Upper lobe of right lung (tissue), 1 donor: ENCODE measurements at regions of chr11 and their contacts with region 1.

Region 1: GRCh38 chr11:43895601-43896000 is 15.0 kb downstream of the ALKBH3 start:
- DNase-seq: no peak
- ATAC-seq: no peak
- H3K4me3 ChIP-seq: no peak overlapping the region
- H3K27ac ChIP-seq: no peak overlapping the region
- H3K4me1 ChIP-seq: no peaks in the 10 kb centered on the region
- H3K27me3 ChIP-seq: no peaks in the 10 kb centered on the region
- CTCF ChIP-seq: no peak

Region 2: DNA sequence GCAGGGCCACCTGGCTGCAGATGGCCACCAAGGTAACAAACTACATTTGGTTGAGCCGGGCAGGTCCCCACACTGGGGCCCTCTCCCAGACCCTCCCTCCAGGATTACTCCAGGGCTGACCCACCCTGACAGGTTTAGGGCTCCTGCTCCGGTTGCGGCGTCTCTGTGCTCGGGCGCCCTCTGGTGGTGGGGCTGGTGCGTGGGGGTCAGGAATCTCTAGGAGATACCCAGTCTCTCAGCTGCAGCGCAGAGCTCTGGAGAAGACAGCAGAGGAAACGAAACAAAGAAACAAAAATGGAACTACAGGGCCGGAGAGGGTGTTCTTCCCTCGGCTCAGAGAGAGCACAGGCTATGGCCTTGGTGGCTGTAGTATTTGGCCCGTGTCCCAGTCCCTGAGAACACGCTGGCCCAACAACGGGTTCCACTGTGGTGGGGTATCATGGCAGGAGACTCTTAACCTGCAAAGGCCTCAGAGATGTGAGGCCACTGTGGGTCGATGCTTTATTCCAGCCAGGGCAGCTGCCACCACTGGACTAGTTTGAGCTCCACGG is 49.2 kb after region 1 on chr11:
- intact Hi-C with region 1: loop called (anchors 10 kb)
- DNase-seq: peak; percentile 92
- ATAC-seq: peak; percentile 69
- H3K4me3 ChIP-seq: peak overlapping the region; percentile 64
- H3K27ac ChIP-seq: peak overlapping the region; percentile 86
- H3K4me1 ChIP-seq: peaks cover 20% of the 10 kb centered on the region
- H3K27me3 ChIP-seq: peaks cover 20% of the 10 kb centered on the region
- CTCF ChIP-seq: peak; percentile 85

Region 3: DNA sequence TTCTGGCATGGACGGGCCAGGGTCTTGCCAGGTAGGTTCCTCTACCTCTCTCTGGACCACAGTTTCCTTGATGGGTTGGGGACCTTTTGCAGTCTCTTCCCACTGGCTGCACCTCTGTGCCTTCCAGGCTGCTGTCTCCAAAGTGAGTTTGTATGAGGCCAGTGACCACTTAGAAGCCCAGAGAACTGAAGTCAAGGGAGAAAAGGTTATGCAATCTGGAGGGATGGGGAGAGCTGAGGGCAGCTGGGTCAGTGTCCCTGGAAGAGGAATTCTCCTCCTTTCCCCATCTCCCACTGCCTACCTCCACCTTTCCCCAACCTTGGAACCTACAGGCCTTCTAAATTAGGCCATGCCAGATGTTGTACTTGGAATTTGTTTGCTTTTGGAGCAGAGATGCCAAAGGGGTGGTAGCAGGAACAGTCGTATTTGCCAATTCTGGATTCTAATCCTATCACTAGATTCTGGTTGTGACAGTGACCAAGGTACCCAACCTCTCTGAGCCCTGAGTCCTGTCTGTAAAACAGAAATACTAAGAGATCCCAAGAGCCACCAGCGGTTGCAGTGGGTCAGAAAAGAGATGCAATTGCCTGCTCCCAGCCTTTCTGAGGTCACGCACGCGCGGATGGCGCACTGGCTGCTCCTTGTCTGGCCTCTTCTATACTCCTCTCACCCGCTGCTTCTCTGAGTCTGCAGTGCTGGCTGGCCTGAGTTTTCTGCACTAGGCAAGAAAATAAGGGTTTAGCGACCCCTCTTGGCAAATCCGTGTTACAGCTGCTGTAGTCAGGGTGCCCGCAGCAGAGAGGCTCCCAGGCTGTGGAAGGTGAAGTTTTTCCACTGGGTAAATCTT is 141.4 kb after region 1 on chr11:
- intact Hi-C with region 1: loop called (anchors 5 kb)
- DNase-seq: peak; percentile 86
- ATAC-seq: peak; percentile 92
- H3K4me3 ChIP-seq: no peak overlapping the region
- H3K27ac ChIP-seq: no peak overlapping the region
- H3K4me1 ChIP-seq: peaks cover 10% of the 10 kb centered on the region
- H3K27me3 ChIP-seq: no peaks in the 10 kb centered on the region
- CTCF ChIP-seq: peak; percentile 79